Activated CD4-positive, alpha-beta memory T cell treated with anti-CD3 and anti-CD28 coated beads for 36 hours (primary cell): ENCODE measurements at regions of chr15 and their contacts with region 1.

Region 1: DNA sequence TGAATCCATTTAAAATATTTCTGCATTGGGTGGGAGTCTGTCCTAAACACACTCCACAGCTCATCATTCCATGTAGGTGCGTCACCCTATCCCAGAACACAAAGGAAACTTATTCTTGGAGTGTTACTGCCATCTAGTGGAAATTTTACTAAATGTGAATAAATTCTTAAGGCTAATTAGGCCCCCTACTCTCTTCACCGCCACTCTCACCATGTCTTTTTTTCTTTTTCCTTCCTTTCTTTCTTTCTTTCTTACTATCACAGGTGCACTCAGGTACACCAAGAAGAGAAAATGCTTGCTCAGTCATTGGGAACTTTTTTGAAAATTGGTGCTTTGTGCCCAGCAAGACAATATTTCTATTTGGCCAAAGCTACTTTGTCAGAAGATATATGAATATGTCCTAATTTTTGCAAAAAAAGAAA is 26.4 kb upstream of the ATP8B4 start:
- DNase-seq: no peak
- H3K4me3 Mint-ChIP-seq: no peak overlapping the region
- H3K27ac Mint-ChIP-seq: no peak overlapping the region
- H3K4me1 Mint-ChIP-seq: peaks cover 17% of the 10 kb centered on the region
- H3K27me3 Mint-ChIP-seq: no peaks in the 10 kb centered on the region

Region 2: GRCh38 chr15:49235446-49236124 is 909.9 kb before region 1 on chr15:
- CTCF ChIA-PET with region 1: interaction called, 4 read pairs
- POLR2A ChIA-PET with region 1: no interaction called
- intact Hi-C with region 1: loop called (anchors 2 kb)
- DNase-seq: peak; percentile 57
- H3K4me3 Mint-ChIP-seq: no peak overlapping the region
- H3K27ac Mint-ChIP-seq: no peak overlapping the region
- H3K4me1 Mint-ChIP-seq: peaks cover 9% of the 10 kb centered on the region
- H3K27me3 Mint-ChIP-seq: no peaks in the 10 kb centered on the region

Region 3: GRCh38 chr15:49421991-49422390 is 723.5 kb before region 1 on chr15:
- CTCF ChIA-PET with region 1: interaction called, 9 read pairs
- POLR2A ChIA-PET with region 1: no interaction called
- intact Hi-C with region 1: loop called (anchors 5 kb)
- DNase-seq: peak; percentile 27
- H3K4me3 Mint-ChIP-seq: no peak overlapping the region
- H3K27ac Mint-ChIP-seq: peak overlapping the region; percentile 48
- H3K4me1 Mint-ChIP-seq: peaks cover 3% of the 10 kb centered on the region
- H3K27me3 Mint-ChIP-seq: no peaks in the 10 kb centered on the region

Region 4: GRCh38 chr15:49471733-49472132 is 673.7 kb before region 1 on chr15:
- CTCF ChIA-PET with region 1: no interaction called
- POLR2A ChIA-PET with region 1: no interaction called
- intact Hi-C with region 1: loop called (anchors 10 kb)
- DNase-seq: peak; percentile 11
- H3K4me3 Mint-ChIP-seq: no peak overlapping the region
- H3K27ac Mint-ChIP-seq: no peak overlapping the region
- H3K4me1 Mint-ChIP-seq: peaks cover 5% of the 10 kb centered on the region
- H3K27me3 Mint-ChIP-seq: no peaks in the 10 kb centered on the region

Region 5: GRCh38 chr15:49876401-49877038 is 268.9 kb before region 1 on chr15:
- CTCF ChIA-PET with region 1: interaction called, 3 read pairs
- POLR2A ChIA-PET with region 1: no interaction called
- intact Hi-C with region 1: loop called (anchors 10 kb)
- DNase-seq: no peak
- H3K4me3 Mint-ChIP-seq: no peak overlapping the region
- H3K27ac Mint-ChIP-seq: no peak overlapping the region
- H3K4me1 Mint-ChIP-seq: no peaks in the 10 kb centered on the region
- H3K27me3 Mint-ChIP-seq: peaks cover 2% of the 10 kb centered on the region

Region 6: DNA sequence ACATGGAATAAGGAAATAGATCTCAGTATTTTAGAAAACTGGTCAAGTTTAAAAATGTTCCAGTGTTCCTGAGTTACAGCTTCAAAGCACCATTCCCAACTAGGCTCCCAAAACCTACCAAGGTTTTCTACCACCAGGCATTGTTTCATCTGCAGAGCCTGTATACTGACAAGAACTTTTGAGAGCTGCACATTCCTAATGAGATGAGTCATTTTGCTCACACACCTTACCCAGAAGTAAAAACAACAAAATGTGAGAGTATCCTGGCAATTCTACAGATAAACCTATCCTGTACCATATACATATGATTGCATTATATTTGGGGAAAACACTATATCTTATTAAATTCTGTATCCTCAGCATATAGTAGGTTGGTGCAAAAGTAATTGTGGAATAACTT is 117.1 kb before region 1 on chr15:
- CTCF ChIA-PET with region 1: no interaction called
- POLR2A ChIA-PET with region 1: no interaction called
- intact Hi-C with region 1: no loop called
- DNase-seq: no peak
- H3K4me3 Mint-ChIP-seq: no peak overlapping the region
- H3K27ac Mint-ChIP-seq: no peak overlapping the region
- H3K4me1 Mint-ChIP-seq: no peaks in the 10 kb centered on the region
- H3K27me3 Mint-ChIP-seq: peaks cover 5% of the 10 kb centered on the region

Region 7: DNA sequence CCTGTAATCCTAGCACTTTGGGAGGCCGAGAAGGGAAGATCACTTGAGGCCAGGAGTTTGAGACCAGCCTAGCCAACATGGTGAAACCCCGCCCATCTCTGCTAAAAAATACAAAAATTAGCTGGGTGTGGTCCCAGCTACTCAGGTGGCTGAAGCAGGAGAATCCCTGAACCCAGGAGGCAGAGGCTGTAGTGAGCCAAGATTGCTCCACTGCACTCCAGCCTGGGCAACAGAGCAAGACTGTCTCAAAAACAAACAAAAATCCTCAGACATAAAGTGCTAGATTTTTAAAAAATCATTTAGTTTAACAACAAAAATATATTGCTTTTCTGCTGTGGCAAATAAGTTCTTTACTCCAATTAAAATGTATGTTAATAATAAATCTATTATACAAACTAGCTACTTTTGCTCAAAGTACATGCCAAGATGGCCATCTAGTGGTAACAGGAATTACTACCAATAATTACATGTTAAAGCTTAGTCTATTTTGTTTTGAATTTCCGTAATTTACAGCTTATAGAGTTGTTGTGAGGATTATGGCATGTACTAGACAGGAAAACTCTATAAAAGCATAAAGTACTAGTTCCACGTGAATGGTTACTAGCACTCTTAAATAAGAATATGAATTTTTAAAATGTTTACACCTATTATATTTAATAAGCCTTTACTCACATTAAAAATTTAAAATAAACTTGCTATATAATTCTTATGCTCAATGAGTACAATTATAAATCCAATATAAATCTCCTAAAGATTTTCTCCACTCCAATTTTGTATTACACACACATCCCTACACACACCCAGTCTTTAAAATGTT is 170.6 kb after region 1 on chr15:
- CTCF ChIA-PET with region 1: interaction called, 19 read pairs
- POLR2A ChIA-PET with region 1: no interaction called
- intact Hi-C with region 1: loop called (anchors 10 kb)
- DNase-seq: no peak
- H3K4me3 Mint-ChIP-seq: no peak overlapping the region
- H3K27ac Mint-ChIP-seq: no peak overlapping the region
- H3K4me1 Mint-ChIP-seq: peaks cover 22% of the 10 kb centered on the region
- H3K27me3 Mint-ChIP-seq: no peaks in the 10 kb centered on the region